K562 (cell line): ENCODE measurements at regions of chr7 and their contacts with region 1.

Region 1: GRCh38 chr7:151008511-151009323 is 15.6 kb downstream of the ATG9B start:
- DNase-seq: peak; percentile 97 to 99 (median 98)
- ATAC-seq: peak; percentile 87
- H3K4me3 ChIP-seq: peak overlapping the region; percentile 57
- H3K27ac ChIP-seq: peak overlapping the region; percentile 85
- H3K4me1 ChIP-seq: peaks cover 43 to 69% of the 10 kb centered on the region in 2 experiments
- H3K27me3 ChIP-seq: no peaks in the 10 kb centered on the region; a peak in 1 of 5 replicates
- CTCF ChIP-seq: peak; percentile 98 to 100 (median 99)
- EP300 ChIP-seq: peak; percentile 69
- POLR2A ChIP-seq: peak; percentile 83
- RAD21 ChIP-seq: peak; percentile 64 to 73

Region 2: GRCh38 chr7:150994141-150994964 is 14.4 kb before region 1 on chr7:
- CTCF ChIA-PET with region 1: no interaction called
- POLR2A ChIA-PET with region 1: interaction called, 17 read pairs
- in situ Hi-C with region 1: no loop called
- intact Hi-C with region 1: loop called (anchors 1 kb)
- DNase-seq: peak; percentile 92 to 98 (median 95)
- ATAC-seq: peak; percentile 93
- H3K4me3 ChIP-seq: no peak overlapping the region
- H3K27ac ChIP-seq: peak overlapping the region; percentile 59
- H3K4me1 ChIP-seq: peaks cover 46 to 56% of the 10 kb centered on the region in 2 experiments
- H3K27me3 ChIP-seq: no peaks in the 10 kb centered on the region
- CTCF ChIP-seq: no peak; a peak in 1 of 6 replicates
- EP300 ChIP-seq: peak; percentile 84
- POLR2A ChIP-seq: peak; percentile 55; the same call in 1 of the 2 replicates
- RAD21 ChIP-seq: peak in 1 of 2 experiments; percentile 15; a peak in 1 of 4 replicates

Region 3: DNA sequence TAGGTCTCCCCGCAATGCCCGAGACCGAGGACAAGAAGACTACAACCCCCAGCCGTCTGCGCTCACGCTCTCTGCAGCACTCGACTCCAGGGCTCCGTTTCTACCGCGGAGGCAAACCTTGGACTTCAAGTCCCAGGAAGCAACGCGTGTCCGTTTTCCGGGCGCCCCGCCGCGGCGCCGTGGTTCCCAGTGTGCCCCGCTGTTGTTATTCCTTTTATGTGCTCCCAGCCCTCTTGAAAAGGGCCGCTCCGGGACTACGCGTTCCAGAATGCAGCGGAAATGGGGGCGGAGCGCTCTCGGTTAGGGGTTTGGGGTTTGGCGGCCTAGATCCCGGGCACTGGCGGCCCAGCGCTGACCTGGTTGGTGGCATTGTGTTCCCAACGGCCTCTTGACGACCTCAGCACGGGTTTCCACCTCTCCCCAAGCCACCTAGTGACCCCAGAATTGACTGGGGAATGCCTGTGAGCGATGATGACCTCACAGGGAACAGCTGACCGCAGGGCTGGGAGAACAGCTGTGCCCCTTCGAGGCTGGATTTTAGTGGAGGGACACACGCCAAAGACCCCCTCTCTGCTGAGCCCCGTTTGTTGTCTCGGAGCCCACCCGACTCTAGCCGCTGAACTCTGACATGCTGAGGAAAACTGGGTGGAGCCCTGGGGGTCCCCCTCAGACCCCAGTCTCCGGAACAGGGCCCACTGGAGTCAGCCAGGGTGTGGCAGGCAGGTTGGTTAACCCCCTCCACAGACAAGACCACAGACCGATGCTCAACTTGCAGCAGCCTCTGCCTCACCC is 49.5 kb after region 1 on chr7:
- CTCF ChIA-PET with region 1: no interaction called
- POLR2A ChIA-PET with region 1: no interaction called
- in situ Hi-C with region 1: no loop called
- intact Hi-C with region 1: loop called (anchors 1 kb)
- DNase-seq: peak; percentile 96 to 100 (median 98)
- ATAC-seq: peak; percentile 86
- H3K4me3 ChIP-seq: peak overlapping the region; percentile 84
- H3K27ac ChIP-seq: peak overlapping the region; percentile 90
- H3K4me1 ChIP-seq: peaks cover 59 to 75% of the 10 kb centered on the region in 2 experiments
- H3K27me3 ChIP-seq: no peaks in the 10 kb centered on the region
- CTCF ChIP-seq: no peak
- EP300 ChIP-seq: peak; percentile 19; the same call in 1 of the 2 replicates
- POLR2A ChIP-seq: peak; percentile 79
- RAD21 ChIP-seq: 0 out of 4 replicates have a peak, but pooled peaks of 1 of the 2 experiments have one; percentile 7

Region 4: GRCh38 chr7:151110941-151111645 is 102.4 kb after region 1 on chr7:
- CTCF ChIA-PET with region 1: interaction called, 5 read pairs
- POLR2A ChIA-PET with region 1: interaction called, 3 read pairs
- in situ Hi-C with region 1: no loop called
- intact Hi-C with region 1: loop called (anchors 1 kb)
- DNase-seq: peak; percentile 88 to 93 (median 92)
- ATAC-seq: peak; percentile 91
- H3K4me3 ChIP-seq: no peak overlapping the region
- H3K27ac ChIP-seq: no peak overlapping the region; the same call in 2 of the 3 replicates
- H3K4me1 ChIP-seq: peaks cover 51 to 73% of the 10 kb centered on the region in 2 experiments
- H3K27me3 ChIP-seq: no peaks in the 10 kb centered on the region
- CTCF ChIP-seq: peak; percentile 94 to 95 (median 95)
- EP300 ChIP-seq: no peak
- POLR2A ChIP-seq: no peak
- RAD21 ChIP-seq: peak; percentile 94